Activated B cell treated with CpG ODN at 0.5 μM for 24 hours (primary cell): ENCODE measurements at regions of chr20 and their contacts with region 1.

Region 1: GRCh38 chr20:36605399-36606157 is at the start of gene RAB5IF:
- DNase-seq: peak; percentile 99
- ATAC-seq: peak; percentile 83
- H3K4me3 Mint-ChIP-seq: peak within 1 kb of the TSS; percentile 97
- H3K27ac Mint-ChIP-seq: peak within 1 kb of the TSS; percentile 99
- H3K4me1 Mint-ChIP-seq: peaks cover 53% of the 10 kb centered on the region
- H3K27me3 Mint-ChIP-seq: no peaks in the 10 kb centered on the region
- CTCF ChIP-seq: peak; percentile 58
- total RNA-seq, gene RAB5IF: 54.9 and 55.7 TPM in 2 replicates

Region 2: GRCh38 chr20:36460648-36461599 is 144.7 kb before region 1 on chr20:
- CTCF ChIA-PET with region 1: no interaction called
- POLR2A ChIA-PET with region 1: interaction called, 9 read pairs
- intact Hi-C with region 1: loop called (anchors 1 kb)
- DNase-seq: peak; percentile 85
- ATAC-seq: peak; percentile 75
- H3K4me3 Mint-ChIP-seq: peak overlapping the region; percentile 74
- H3K27ac Mint-ChIP-seq: peak overlapping the region; percentile 91
- H3K4me1 Mint-ChIP-seq: peaks cover 46% of the 10 kb centered on the region
- H3K27me3 Mint-ChIP-seq: no peaks in the 10 kb centered on the region
- CTCF ChIP-seq: no peak

Region 3: DNA sequence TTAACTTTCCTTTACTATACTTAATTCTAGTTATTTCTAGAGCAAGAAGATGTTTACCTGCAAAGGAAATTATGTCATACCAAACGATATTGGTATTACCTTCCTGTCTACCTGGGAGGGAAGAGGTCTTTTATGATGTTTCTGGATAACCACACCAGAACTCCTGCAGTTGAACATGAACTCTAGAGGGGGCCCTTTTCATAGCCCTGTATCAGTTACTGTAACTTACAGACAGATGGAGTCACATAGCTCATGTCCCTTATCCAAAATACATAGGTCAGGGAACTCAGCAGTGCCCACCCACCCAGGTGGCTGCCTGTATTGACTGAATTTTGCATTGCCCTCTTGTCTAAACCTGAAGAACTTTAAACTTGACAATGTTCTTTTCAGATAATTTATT is 99.3 kb before region 1 on chr20:
- CTCF ChIA-PET with region 1: interaction called, 3 read pairs
- POLR2A ChIA-PET with region 1: interaction called, 6 read pairs
- intact Hi-C with region 1: loop called (anchors 1 kb)
- DNase-seq: no peak
- ATAC-seq: peak; percentile 56
- H3K4me3 Mint-ChIP-seq: no peak overlapping the region
- H3K27ac Mint-ChIP-seq: no peak overlapping the region
- H3K4me1 Mint-ChIP-seq: peaks cover 3% of the 10 kb centered on the region
- H3K27me3 Mint-ChIP-seq: no peaks in the 10 kb centered on the region
- CTCF ChIP-seq: no peak

Region 4: DNA sequence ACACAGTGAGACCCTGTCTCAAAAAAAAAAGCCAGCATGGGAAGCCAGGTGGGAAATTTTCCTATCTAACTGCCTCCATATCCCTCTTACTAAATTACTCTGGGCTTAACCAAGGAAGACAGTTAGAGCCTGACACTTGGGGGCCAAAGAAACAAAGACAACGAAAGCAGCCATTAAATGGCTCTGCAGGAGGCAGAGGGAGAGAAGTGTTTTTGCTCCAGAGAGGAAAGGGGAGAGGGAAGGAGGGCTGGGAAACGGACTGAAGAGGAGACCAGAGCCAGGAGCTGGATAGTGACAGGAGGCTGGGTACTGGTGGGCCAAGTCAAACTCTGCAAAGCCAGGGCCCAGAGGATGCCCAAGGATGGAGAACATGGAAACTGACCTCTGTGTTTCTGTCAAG is 42.9 kb before region 1 on chr20:
- CTCF ChIA-PET with region 1: interaction called, 17 read pairs
- POLR2A ChIA-PET with region 1: interaction called, 27 read pairs
- intact Hi-C with region 1: no loop called
- DNase-seq: no peak
- ATAC-seq: no peak
- H3K4me3 Mint-ChIP-seq: no peak overlapping the region
- H3K27ac Mint-ChIP-seq: no peak overlapping the region
- H3K4me1 Mint-ChIP-seq: no peaks in the 10 kb centered on the region
- H3K27me3 Mint-ChIP-seq: no peaks in the 10 kb centered on the region
- CTCF ChIP-seq: no peak

Region 5: DNA sequence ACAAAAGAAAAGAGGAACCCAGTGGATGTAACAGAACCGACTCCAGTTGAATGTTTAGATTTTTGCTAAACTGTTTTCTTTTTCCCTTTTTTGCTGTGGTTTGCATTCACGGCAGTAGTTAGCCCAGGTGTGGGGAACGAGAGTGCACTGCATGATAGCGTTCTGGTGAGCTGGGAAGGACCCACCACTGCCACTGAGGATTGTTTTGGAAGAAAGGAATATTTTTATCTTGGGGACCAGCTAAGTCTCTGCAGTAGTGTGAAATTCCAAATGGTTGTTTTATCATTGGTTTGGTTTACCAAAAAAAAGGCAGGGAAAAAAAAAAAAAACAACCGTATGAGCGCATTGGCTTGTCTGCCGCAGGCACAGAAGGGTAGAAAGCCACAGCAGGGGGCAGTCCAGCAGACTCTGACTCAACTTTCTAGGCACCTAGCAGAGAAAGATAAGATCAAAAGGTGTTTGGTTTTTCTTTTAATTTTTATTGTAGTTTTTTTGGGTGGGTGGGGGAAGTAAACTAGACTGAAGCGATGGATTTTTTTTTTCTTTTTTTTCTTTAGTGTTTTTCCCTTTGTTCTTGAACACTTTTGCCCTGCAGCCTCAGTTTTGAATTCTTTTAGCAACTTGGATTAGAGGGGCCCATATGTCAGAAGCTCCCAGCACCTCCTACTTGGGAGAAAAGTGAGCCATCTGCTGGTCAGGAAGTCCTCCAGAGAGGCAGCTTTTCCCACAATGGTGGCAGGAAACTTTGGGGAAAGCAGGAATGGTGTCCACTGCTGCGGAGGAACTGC is 13.5 kb before region 1 on chr20:
- CTCF ChIA-PET with region 1: interaction called, 47 read pairs
- POLR2A ChIA-PET with region 1: interaction called, 358 read pairs
- intact Hi-C with region 1: loop called (anchors 1 kb)
- DNase-seq: no peak
- ATAC-seq: no peak
- H3K4me3 Mint-ChIP-seq: no peak overlapping the region
- H3K27ac Mint-ChIP-seq: peak overlapping the region; percentile 53
- H3K4me1 Mint-ChIP-seq: peaks cover 70% of the 10 kb centered on the region
- H3K27me3 Mint-ChIP-seq: no peaks in the 10 kb centered on the region
- CTCF ChIP-seq: no peak

Region 6: GRCh38 chr20:36709126-36709525 is 103.5 kb after region 1 on chr20:
- CTCF ChIA-PET with region 1: no interaction called
- POLR2A ChIA-PET with region 1: no interaction called
- intact Hi-C with region 1: no loop called
- DNase-seq: no peak
- ATAC-seq: no peak
- H3K4me3 Mint-ChIP-seq: no peak overlapping the region
- H3K27ac Mint-ChIP-seq: no peak overlapping the region
- H3K4me1 Mint-ChIP-seq: no peaks in the 10 kb centered on the region
- H3K27me3 Mint-ChIP-seq: no peaks in the 10 kb centered on the region
- CTCF ChIP-seq: no peak

Region 7: GRCh38 chr20:36745927-36746659 is 140.5 kb after region 1 on chr20 and contains the start of gene NDRG3:
- CTCF ChIA-PET with region 1: no interaction called
- POLR2A ChIA-PET with region 1: interaction called, 7 read pairs
- intact Hi-C with region 1: loop called (anchors 1 kb)
- DNase-seq: peak; percentile 84
- ATAC-seq: peak; percentile 98
- H3K4me3 Mint-ChIP-seq: peak within 1 kb of the TSS; percentile 87
- H3K27ac Mint-ChIP-seq: peak within 1 kb of the TSS; percentile 88
- H3K4me1 Mint-ChIP-seq: peaks cover 16% of the 10 kb centered on the region
- H3K27me3 Mint-ChIP-seq: no peaks in the 10 kb centered on the region
- CTCF ChIP-seq: no peak
- total RNA-seq, gene NDRG3: 20.8 and 21.4 TPM in 2 replicates

Region 8: DNA sequence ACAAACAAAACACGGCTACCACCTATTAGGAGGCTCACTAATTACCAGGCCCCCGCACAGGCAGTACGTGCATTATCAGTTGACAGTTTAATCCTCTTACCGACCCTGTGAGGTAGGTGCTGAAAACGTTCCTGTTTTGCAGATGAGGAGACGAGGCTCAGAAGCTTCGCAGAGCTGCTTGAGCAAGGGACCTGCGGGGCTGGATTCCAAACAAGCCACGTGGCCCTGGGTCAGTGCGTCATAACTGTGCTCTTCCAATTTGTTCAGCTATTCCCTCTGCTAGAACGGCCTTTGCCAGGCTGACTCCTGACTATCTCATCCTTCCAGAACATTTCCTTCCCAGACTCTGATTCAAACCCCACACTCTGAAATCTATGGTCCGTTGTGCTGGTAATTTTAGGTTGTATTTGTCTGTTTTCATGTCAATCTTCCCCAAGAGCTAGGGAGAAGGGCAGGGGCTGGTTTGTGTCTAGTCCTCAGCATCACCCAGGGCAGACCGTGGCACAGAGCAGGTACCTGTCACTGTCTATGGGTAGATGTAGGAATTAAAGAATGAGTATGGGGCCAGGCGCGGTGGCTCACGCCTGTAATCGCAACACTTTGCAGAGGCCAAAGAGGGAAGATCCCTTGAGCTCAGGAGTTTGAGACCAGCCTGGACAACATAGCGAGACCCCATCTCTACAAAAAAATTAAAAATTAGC is 241.6 kb after region 1 on chr20:
- CTCF ChIA-PET with region 1: no interaction called
- POLR2A ChIA-PET with region 1: interaction called, 13 read pairs
- intact Hi-C with region 1: no loop called
- DNase-seq: no peak
- ATAC-seq: no peak
- H3K4me3 Mint-ChIP-seq: peak overlapping the region; percentile 74
- H3K27ac Mint-ChIP-seq: peak overlapping the region; percentile 95
- H3K4me1 Mint-ChIP-seq: peaks cover 91% of the 10 kb centered on the region
- H3K27me3 Mint-ChIP-seq: no peaks in the 10 kb centered on the region
- CTCF ChIP-seq: no peak

Region 9: GRCh38 chr20:37223053-37223452 is 617.5 kb after region 1 on chr20:
- CTCF ChIA-PET with region 1: no interaction called
- POLR2A ChIA-PET with region 1: no interaction called
- intact Hi-C with region 1: no loop called
- DNase-seq: no peak
- ATAC-seq: peak; percentile 76
- H3K4me3 Mint-ChIP-seq: no peak overlapping the region
- H3K27ac Mint-ChIP-seq: peak overlapping the region; percentile 70
- H3K4me1 Mint-ChIP-seq: peaks cover 4% of the 10 kb centered on the region
- H3K27me3 Mint-ChIP-seq: no peaks in the 10 kb centered on the region
- CTCF ChIP-seq: no peak